ENCODE measurements at regions of chr22 and their contacts with region 1.

Region 1: GRCh38 chr22:41285820-41286638 is at the start of gene RANGAP1:
- DNase-seq: peak; percentile 99
- H3K4me3 Mint-ChIP-seq: peak within 1 kb of the TSS; percentile 94
- H3K27ac Mint-ChIP-seq: peak within 1 kb of the TSS; percentile 99
- H3K4me1 Mint-ChIP-seq: peaks cover 41% of the 10 kb centered on the region
- H3K27me3 Mint-ChIP-seq: no peaks in the 10 kb centered on the region
- total RNA-seq, gene RANGAP1: 98.7 to 99.7 TPM

Region 2: DNA sequence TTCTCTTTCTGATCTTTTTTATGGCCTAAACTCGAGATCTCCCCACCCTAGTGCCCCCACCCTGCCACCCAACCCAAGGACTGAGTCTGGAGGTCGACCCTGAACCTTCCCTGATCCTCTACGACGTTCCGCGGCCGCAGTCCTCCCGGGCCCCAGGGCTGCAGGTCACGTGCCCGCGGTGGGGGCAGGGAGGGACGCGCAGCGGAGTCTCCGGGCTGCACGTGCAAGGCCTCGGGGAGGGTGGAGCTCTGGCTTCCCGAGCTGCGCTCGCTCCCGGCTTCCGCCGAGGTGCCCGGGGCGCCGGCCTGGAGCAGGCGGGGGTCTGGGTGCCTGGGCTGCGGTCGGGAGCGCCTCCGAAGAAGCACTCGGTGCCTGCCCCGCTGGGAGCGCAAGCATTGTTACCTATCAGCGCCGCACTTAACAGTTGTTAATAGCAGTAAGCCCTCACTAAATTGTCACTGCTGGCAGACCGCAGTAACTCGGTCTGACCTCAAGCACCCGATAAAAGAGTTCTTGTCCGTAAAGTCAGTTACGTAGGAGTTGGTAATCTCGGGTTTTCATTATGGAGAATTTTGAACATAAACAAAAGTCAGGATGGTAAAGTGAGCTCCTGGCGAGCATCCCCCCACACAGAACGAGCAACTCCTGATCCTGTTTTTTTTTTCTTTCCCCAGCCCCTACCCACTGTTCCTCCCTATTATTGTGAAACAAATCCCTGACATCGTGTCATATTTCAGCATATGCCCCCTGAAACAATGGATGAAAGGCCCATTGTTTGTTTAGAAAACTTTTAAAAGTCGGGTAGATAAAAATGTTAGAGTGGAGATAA is 263.3 kb before region 1 on chr22:
- CTCF ChIA-PET with region 1: no interaction called
- POLR2A ChIA-PET with region 1: interaction called, 10 read pairs
- DNase-seq: peak; percentile 86
- H3K4me3 Mint-ChIP-seq: peak overlapping the region; percentile 75
- H3K27ac Mint-ChIP-seq: peak overlapping the region; percentile 69
- H3K4me1 Mint-ChIP-seq: peaks cover 22% of the 10 kb centered on the region
- H3K27me3 Mint-ChIP-seq: peaks cover 9% of the 10 kb centered on the region

Region 3: DNA sequence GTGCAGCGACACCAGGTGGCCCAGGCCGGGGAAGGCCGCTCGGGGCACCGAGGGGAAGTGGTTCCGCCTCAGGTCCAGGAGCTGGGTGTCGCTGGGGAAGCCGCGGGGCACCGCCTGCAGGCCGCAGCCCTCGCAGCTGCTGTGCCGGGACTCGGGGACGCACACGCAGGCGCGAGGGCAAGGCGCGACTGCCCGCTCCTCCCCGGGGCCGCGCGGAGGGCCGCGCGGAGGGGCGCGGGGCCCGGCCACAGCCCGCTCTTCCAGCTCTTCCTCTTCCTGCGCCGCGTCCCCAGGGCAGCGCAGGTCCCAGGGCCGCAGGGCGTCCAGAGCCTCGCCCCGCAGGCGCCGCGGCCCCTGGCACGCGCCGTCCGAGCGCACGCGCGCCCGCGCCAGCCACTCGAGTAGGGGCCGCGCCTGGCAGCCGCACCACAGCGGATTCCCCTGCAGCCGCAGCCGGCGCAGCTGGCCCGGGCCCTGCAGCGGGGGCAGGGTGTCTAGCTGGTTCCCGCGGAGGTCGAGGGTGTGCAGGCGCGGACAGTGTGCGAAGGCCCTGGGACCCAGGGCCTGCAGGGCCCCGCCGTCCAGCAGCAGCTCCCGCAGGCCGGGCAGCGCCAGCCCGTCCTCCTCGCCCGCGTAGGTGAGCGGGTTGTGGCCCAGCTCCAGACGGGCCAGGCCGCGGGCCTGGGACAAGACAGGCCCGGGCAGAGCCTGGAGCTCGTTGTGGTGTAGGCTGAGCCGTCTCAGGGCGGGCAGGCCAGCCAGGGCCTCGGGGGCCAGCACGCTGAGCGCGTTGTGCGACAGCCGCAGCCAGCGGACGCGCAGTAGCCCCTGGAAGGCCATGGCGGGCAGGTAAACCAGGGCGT is 48.1 kb before region 1 on chr22:
- CTCF ChIA-PET with region 1: interaction called, 10 read pairs
- POLR2A ChIA-PET with region 1: interaction called, 12 read pairs
- DNase-seq: peak; percentile 89
- H3K4me3 Mint-ChIP-seq: peak overlapping the region; percentile 61
- H3K27ac Mint-ChIP-seq: no peak overlapping the region
- H3K4me1 Mint-ChIP-seq: peaks cover 7% of the 10 kb centered on the region
- H3K27me3 Mint-ChIP-seq: peaks cover 4% of the 10 kb centered on the region

Region 4: GRCh38 chr22:41327124-41327523 is 41.1 kb after region 1 on chr22:
- CTCF ChIA-PET with region 1: no interaction called
- POLR2A ChIA-PET with region 1: no interaction called
- DNase-seq: no peak
- H3K4me3 Mint-ChIP-seq: no peak overlapping the region
- H3K27ac Mint-ChIP-seq: no peak overlapping the region
- H3K4me1 Mint-ChIP-seq: no peaks in the 10 kb centered on the region
- H3K27me3 Mint-ChIP-seq: no peaks in the 10 kb centered on the region

Region 5: GRCh38 chr22:41352051-41352450 is 66.0 kb after region 1 on chr22:
- CTCF ChIA-PET with region 1: no interaction called
- POLR2A ChIA-PET with region 1: no interaction called
- DNase-seq: no peak
- H3K4me3 Mint-ChIP-seq: no peak overlapping the region
- H3K27ac Mint-ChIP-seq: no peak overlapping the region
- H3K4me1 Mint-ChIP-seq: no peaks in the 10 kb centered on the region
- H3K27me3 Mint-ChIP-seq: no peaks in the 10 kb centered on the region

Region 6: DNA sequence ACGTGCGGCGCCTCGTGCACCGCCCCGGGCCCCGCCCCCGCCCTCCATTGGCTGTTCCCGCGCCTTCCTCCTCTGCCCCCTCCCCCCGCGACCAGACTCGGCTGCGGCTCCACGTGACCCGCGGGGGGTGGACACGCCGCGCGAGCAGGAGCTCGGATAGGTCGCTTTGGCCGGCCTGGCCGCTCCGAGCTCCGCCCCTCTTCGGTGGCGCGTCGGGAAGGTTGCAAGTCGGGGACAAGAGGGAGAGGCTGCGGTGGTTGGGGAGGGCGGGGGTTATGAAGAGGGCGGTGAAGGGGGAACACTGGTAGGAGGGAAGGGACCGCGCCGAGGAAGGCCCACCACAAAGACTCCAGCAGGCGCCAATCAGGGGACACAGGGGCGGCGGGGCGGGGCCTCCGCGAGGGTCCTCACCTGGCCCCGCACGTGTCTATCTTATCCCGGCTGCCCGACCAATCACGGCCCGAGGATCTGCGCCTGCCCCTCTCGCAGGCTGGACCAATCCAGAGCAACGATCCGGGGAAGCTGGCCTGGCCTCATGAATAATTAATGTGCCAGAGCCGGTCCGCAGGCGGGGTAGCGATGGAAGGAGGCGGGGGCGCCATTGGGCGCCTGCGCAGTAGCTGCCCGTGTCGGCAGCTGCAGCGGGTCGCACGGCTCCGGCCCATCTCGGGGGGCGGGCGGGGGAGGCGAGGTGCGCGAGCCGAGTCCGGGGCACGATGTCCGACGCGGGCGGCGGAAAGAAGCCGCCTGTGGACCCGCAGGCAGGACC is 95.5 kb after region 1 on chr22 and contains the start of gene TEF:
- CTCF ChIA-PET with region 1: no interaction called
- POLR2A ChIA-PET with region 1: interaction called, 20 read pairs
- DNase-seq: peak; percentile 98
- H3K4me3 Mint-ChIP-seq: peak within 1 kb of the TSS; percentile 88
- H3K27ac Mint-ChIP-seq: peak within 1 kb of the TSS; percentile 89
- H3K4me1 Mint-ChIP-seq: peaks cover 15% of the 10 kb centered on the region
- H3K27me3 Mint-ChIP-seq: peaks cover under 1% of the 10 kb centered on the region
- total RNA-seq, gene TEF: 2.3 to 3.3 TPM

Region 7: GRCh38 chr22:41425660-41426365 is 139.8 kb after region 1 on chr22:
- CTCF ChIA-PET with region 1: no interaction called
- POLR2A ChIA-PET with region 1: no interaction called
- DNase-seq: peak; percentile 77
- H3K4me3 Mint-ChIP-seq: peak overlapping the region; percentile 14
- H3K27ac Mint-ChIP-seq: peak overlapping the region; percentile 82
- H3K4me1 Mint-ChIP-seq: peaks cover 14% of the 10 kb centered on the region
- H3K27me3 Mint-ChIP-seq: no peaks in the 10 kb centered on the region